Endothelial cell of umbilical vein (primary cell): ENCODE measurements at regions of chr12 and their contacts with region 1.

Region 1: DNA sequence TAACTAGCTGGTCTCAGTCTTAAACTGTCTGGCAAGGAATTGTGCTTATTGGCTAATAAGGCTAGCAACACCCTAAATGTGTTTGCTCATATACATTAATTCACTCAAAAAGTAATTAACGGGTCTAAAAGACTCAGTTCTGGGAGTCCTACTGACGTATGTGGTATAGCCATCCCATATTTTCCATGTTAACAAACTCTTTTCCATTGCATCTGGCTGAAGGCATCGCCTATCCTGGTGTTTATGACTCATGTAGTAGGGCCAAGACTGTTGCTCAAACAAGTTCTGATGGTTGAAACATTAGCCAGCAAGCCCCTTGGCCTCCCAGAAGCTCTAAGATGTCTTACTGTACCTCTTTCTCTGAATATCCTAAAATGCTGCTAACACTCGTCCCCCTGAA is 98.5 kb downstream of the PHLDA1 start:
- DNase-seq: peak; percentile 27
- H3K4me3 ChIP-seq: no peak overlapping the region
- H3K27ac ChIP-seq: no peak overlapping the region
- H3K4me1 ChIP-seq: peaks cover 20% of the 10 kb centered on the region
- H3K27me3 ChIP-seq: peaks cover 13% of the 10 kb centered on the region in 2 experiments
- CTCF ChIP-seq: no peak
- POLR2A ChIP-seq: no peak

Region 2: GRCh38 chr12:75705749-75706711 is 227.1 kb before region 1 on chr12:
- CTCF ChIA-PET with region 1: interaction called, 4 read pairs
- POLR2A ChIA-PET with region 1: no interaction called
- dilution Hi-C with region 1: no loop called
- intact Hi-C with region 1: loop called (anchors 1 kb)
- DNase-seq: peak; percentile 98
- H3K4me3 ChIP-seq: peak overlapping the region in 1 of 3 experiments; percentile 37
- H3K27ac ChIP-seq: peak overlapping the region; percentile 84
- H3K4me1 ChIP-seq: peaks cover 44% of the 10 kb centered on the region
- H3K27me3 ChIP-seq: no peaks in the 10 kb centered on the region
- CTCF ChIP-seq: no peak
- POLR2A ChIP-seq: peak; percentile 49

Region 3: GRCh38 chr12:75814851-75815754 is 118.0 kb before region 1 on chr12:
- CTCF ChIA-PET with region 1: interaction called, 4 read pairs
- POLR2A ChIA-PET with region 1: no interaction called
- dilution Hi-C with region 1: no loop called
- intact Hi-C with region 1: loop called (anchors 1 kb)
- DNase-seq: peak; percentile 95
- H3K4me3 ChIP-seq: no peak overlapping the region
- H3K27ac ChIP-seq: peak overlapping the region; percentile 19
- H3K4me1 ChIP-seq: peaks cover 10% of the 10 kb centered on the region
- H3K27me3 ChIP-seq: no peaks in the 10 kb centered on the region
- CTCF ChIP-seq: no peak
- POLR2A ChIP-seq: no peak

Region 4: DNA sequence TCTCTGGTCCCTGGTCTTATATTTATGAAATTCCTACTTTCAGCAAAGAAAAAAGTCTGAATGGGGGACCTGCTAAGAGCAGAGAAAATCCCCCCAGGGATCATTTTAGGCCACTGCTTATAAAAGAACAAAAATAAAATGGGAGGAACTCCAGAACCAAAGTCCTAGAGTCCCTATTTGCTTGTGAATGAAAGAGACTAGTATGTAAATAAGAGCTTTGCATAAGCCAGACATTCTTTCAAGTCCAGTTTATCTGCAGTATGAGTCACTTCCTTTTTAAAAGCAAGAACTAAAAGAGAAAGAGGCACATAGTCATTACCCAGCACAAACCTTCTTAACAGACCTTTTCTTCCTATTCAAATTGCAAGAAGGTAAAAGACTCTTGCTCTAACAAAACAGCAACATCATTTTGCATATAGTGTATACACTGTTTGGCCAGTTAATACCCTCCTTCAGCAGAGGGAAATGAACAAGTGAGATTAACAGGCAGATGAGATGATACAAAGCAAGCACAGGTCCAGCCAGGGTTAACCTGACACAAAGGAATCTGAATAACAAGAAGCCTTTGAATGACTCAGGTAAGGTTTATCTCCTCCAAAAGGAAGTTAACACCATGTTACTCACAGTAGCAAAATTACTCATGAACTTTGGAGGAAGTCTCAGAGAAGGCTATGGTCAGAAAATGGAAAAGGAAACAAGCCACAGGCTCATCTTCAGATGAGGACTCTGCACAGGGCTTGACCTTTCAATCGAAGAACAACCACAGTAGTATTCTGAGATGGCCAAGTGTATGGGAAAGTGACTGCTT is 11.2 kb after region 1 on chr12:
- CTCF ChIA-PET with region 1: interaction called, 4 read pairs
- POLR2A ChIA-PET with region 1: no interaction called
- dilution Hi-C with region 1: no loop called
- intact Hi-C with region 1: loop called (anchors 1 kb)
- DNase-seq: peak; percentile 86
- H3K4me3 ChIP-seq: no peak overlapping the region
- H3K27ac ChIP-seq: peak overlapping the region; percentile 94
- H3K4me1 ChIP-seq: peaks cover 23% of the 10 kb centered on the region
- H3K27me3 ChIP-seq: no peaks in the 10 kb centered on the region
- CTCF ChIP-seq: no peak
- POLR2A ChIP-seq: peak; percentile 54

Region 5: GRCh38 chr12:76094754-76095153 is 161.7 kb after region 1 on chr12:
- CTCF ChIA-PET with region 1: no interaction called
- POLR2A ChIA-PET with region 1: no interaction called
- dilution Hi-C with region 1: no loop called
- intact Hi-C with region 1: no loop called
- DNase-seq: no peak
- H3K4me3 ChIP-seq: no peak overlapping the region
- H3K27ac ChIP-seq: no peak overlapping the region
- H3K4me1 ChIP-seq: no peaks in the 10 kb centered on the region
- H3K27me3 ChIP-seq: no peaks in the 10 kb centered on the region
- CTCF ChIP-seq: no peak
- POLR2A ChIP-seq: no peak

Region 6: GRCh38 chr12:76374386-76375020 is 441.4 kb after region 1 on chr12:
- CTCF ChIA-PET with region 1: no interaction called
- POLR2A ChIA-PET with region 1: no interaction called
- dilution Hi-C with region 1: no loop called
- intact Hi-C with region 1: no loop called
- DNase-seq: no peak
- H3K4me3 ChIP-seq: no peak overlapping the region
- H3K27ac ChIP-seq: no peak overlapping the region
- H3K4me1 ChIP-seq: no peaks in the 10 kb centered on the region
- H3K27me3 ChIP-seq: no peaks in the 10 kb centered on the region
- CTCF ChIP-seq: no peak
- POLR2A ChIP-seq: no peak